ENCODE measurements at regions of chr19 and their contacts with region 1.

Region 1: DNA sequence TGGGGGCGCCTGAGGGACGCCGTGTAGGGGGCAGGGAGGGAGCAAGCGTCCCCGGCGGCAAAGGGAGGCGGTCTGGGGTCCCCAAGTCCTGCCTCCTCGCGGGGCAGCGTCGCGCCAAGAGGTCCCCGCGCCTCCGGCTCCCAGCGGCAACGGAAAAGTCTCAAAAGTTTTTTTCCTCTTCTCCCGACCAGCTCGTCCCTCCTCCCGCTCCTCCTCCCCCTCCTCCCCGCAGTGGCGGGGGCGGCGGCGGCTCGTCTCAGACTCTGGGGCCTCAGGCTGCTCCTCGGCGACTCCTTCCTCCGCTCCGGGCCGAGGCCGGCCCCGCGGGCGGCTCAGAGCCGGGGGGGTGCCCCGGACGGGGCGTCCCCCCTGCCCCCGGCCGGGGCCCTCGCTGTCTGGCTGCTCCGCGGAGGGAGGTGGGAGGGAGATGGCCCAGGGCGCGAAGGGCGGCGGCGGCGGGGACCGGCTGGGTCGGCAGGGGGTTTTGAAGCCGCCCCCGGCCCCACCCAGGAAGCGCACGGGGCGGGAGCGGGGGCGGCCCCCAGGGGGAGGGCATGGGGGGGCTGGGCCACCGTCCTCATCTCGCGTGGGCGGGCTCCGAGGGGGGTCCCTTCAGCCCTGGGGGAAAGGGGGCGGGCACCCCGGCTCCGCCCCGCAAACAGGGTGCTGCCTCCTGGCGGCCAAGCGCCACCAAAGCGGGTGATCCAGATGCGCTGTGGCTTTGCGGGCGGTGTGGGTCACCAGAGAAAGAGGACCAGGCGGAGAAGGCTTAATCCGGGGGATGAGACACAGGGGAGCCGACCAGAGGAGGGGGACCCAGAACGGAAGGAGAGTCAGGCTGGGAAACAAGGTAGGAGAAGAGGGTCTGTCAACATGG is at the start of gene TGFB1:
- DNase-seq: peak; percentile 74
- H3K4me3 ChIP-seq: peak within 1 kb of the TSS; percentile 63 to 98 (median 95)
- H3K27ac ChIP-seq: peak within 1 kb of the TSS; percentile 49
- H3K4me1 ChIP-seq: peaks cover 5% of the 10 kb centered on the region
- H3K27me3 ChIP-seq: no peaks in the 10 kb centered on the region
- CTCF ChIP-seq: peak; percentile 64 to 92
- total RNA-seq, gene TGFB1: 9.8 to 84.1 TPM

Region 2: DNA sequence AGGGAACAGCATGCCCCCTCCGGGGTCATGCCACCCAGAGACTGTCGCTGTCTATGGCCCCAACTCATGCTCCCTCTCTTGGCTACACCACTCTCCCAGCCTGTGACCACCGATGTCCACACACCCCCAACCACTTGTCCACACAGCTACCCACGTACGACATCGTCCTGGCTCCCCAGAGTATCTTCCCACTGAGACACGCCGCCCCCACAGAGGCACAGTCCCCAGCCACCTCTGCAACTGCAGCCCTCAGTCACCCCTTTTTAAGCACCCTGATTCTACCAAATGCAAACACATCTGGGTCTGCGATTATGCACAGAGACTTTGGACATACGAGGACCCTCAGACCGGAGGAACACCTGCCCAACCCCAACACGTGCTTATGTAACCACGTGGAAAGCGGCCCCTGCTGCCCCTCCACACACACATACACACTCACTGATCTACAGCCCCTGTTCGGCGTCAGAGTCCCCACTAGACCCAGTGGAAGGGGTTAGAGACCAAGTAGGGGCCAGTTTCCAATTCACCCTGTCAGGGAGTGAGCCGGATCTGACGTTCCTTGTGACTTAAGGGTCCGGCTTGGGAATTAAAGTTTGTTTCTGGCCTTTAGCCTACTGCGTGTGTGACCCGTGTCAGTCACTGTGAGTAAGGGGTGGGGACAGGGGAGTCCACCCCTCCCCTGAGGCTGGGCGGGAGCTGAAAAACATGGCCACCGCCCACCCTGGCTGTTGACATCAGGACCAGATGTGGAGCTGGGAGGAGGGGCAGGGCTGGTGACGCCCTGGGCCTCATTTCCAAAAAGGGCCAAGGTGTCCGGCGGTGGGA is 146.6 kb before region 1 on chr19:
- CTCF ChIA-PET with region 1: no interaction called
- dilution Hi-C with region 1: no loop called
- in situ Hi-C with region 1: no loop called
- intact Hi-C with region 1: loop called (anchors 1 kb)
- DNase-seq: no peak
- H3K4me3 ChIP-seq: no peak overlapping the region
- H3K27ac ChIP-seq: no peak overlapping the region
- H3K4me1 ChIP-seq: no peaks in the 10 kb centered on the region
- H3K27me3 ChIP-seq: no peaks in the 10 kb centered on the region
- CTCF ChIP-seq: no peak

Region 3: GRCh38 chr19:41273076-41273475 is 80.6 kb before region 1 on chr19:
- CTCF ChIA-PET with region 1: no interaction called
- dilution Hi-C with region 1: loop called (anchors 5 kb)
- in situ Hi-C with region 1: no loop called
- intact Hi-C with region 1: no loop called
- DNase-seq: no peak
- H3K4me3 ChIP-seq: no peak overlapping the region
- H3K27ac ChIP-seq: no peak overlapping the region
- H3K4me1 ChIP-seq: no peaks in the 10 kb centered on the region
- H3K27me3 ChIP-seq: no peaks in the 10 kb centered on the region
- CTCF ChIP-seq: no peak

Region 4: DNA sequence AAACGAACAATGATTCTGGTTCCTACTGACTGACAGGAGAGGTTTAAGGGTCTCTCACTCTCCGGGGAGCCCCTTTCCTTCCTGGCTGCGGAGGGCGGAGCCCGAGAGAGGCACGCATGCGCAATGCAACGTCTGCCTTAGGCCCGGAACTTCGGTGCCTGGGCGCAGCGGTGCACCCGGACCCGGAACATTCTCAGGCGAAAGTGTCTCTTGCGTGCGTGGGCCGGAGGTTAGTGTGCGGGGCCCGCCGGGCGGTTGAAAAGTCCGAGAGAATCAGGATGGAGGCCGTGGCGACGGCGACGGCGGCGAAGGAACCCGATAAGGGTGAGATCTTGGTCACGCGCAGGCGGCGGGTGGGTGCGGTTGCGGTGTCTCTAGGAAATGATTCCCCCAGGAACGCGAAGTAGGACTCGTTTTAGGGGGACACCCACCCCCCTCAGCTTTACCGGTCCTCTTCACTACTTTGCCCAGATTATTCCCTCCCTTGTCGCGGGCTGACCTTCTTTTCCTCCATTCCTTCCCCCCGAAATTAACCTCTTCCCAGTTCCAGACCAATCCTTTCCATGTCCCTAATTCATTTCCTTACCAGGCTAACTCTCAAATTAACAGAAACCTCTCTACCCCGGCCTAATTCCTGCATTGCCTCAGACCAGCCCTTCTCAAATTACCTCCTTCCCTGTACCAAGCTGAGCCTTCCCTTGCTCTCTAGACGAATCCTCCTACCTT is 43.5 kb before region 1 on chr19 and contains the start of gene CCDC97:
- CTCF ChIA-PET with region 1: no interaction called
- dilution Hi-C with region 1: no loop called
- in situ Hi-C with region 1: no loop called
- intact Hi-C with region 1: loop called (anchors 1 kb)
- DNase-seq: peak; percentile 83
- H3K4me3 ChIP-seq: peak within 1 kb of the TSS; percentile 75 to 89 (median 88)
- H3K27ac ChIP-seq: peak within 1 kb of the TSS; percentile 80
- H3K4me1 ChIP-seq: peaks cover 15% of the 10 kb centered on the region
- H3K27me3 ChIP-seq: no peaks in the 10 kb centered on the region
- CTCF ChIP-seq: peak in 1 of 2 donors; percentile 3
- total RNA-seq, gene CCDC97: 10.8 to 24.8 TPM

Region 5: GRCh38 chr19:41363753-41364523 is 10.2 kb after region 1 on chr19 and contains the start of gene B9D2:
- CTCF ChIA-PET with region 1: no interaction called
- dilution Hi-C with region 1: no loop called
- in situ Hi-C with region 1: no loop called
- intact Hi-C with region 1: loop called (anchors 1 kb)
- DNase-seq: peak; percentile 96
- H3K4me3 ChIP-seq: peak within 1 kb of the TSS; percentile 67 to 85 (median 71)
- H3K27ac ChIP-seq: peak within 1 kb of the TSS; percentile 96
- H3K4me1 ChIP-seq: peaks cover 22% of the 10 kb centered on the region
- H3K27me3 ChIP-seq: no peaks in the 10 kb centered on the region
- CTCF ChIP-seq: no peak
- total RNA-seq, gene B9D2: 3.0 to 3.6 TPM

Region 6: GRCh38 chr19:41397086-41398049 is 43.7 kb after region 1 on chr19 and contains the starts of genes BCKDHA and EXOSC5:
- CTCF ChIA-PET with region 1: no interaction called
- dilution Hi-C with region 1: no loop called
- in situ Hi-C with region 1: no loop called
- intact Hi-C with region 1: loop called (anchors 1 kb)
- DNase-seq: peak; percentile 99
- H3K4me3 ChIP-seq: peak within 1 kb of the TSS; percentile 90 to 97 (median 94)
- H3K27ac ChIP-seq: peak within 1 kb of the TSS; percentile 97
- H3K4me1 ChIP-seq: peaks cover 7% of the 10 kb centered on the region
- H3K27me3 ChIP-seq: no peaks in the 10 kb centered on the region
- CTCF ChIP-seq: no peak
- total RNA-seq, gene BCKDHA: 13.5 to 36.5 TPM
- total RNA-seq, gene EXOSC5: 16.5 to 17.3 TPM

Region 7: GRCh38 chr19:41426952-41427646 is 73.4 kb after region 1 on chr19 and contains the start of gene B3GNT8:
- CTCF ChIA-PET with region 1: no interaction called
- dilution Hi-C with region 1: loop called (anchors 5 kb)
- in situ Hi-C with region 1: no loop called
- intact Hi-C with region 1: loop called (anchors 2 kb)
- DNase-seq: peak; percentile 84
- H3K4me3 ChIP-seq: peak within 1 kb of the TSS; percentile 52 to 67 (median 53)
- H3K27ac ChIP-seq: peak within 1 kb of the TSS; percentile 51
- H3K4me1 ChIP-seq: peaks cover 26% of the 10 kb centered on the region
- H3K27me3 ChIP-seq: no peaks in the 10 kb centered on the region
- CTCF ChIP-seq: no peak
- total RNA-seq, gene B3GNT8: 5.2 to 5.8 TPM